Psoas muscle (tissue), 8 donors: ENCODE measurements at regions of chr12 and their contacts with region 1.

Region 1: DNA sequence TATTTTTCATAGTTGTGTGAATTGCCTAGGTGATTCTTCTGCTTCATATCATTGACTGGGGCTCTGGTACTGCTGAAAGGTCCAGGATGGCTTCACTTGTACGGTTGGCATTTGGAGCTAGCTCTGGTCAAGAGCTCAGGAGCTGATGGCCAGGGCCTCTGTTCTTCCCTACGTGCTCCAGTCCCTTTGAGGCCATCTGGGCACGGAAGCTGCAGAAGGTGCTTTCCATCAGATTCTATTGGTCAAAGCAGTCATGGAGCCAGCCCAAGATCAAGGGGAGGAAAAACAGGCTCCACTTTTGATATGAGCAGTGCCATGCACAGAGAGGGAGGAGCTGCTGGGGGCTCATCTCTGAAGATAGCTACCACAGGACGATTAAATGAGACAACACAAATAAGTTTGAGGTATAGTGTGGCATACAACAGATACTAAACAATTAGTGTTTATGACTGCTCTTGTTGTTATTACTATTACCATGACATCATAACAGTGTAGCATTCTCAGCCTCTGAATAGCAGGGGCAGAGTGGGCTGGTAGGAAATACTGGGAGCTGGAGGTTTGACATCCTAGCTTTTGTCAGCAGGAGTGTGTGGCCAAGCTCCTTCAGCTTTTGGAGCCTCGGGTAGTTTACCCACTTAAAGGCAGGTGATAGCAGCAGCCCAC is 10.4 kb downstream of the KRT83 start:
- DNase-seq: no peak
- ATAC-seq: no peak
- H3K4me3 ChIP-seq: no peak overlapping the region
- H3K27ac ChIP-seq: no peak overlapping the region
- H3K4me1 ChIP-seq: peaks cover 7% of the 10 kb centered on the region
- H3K27me3 ChIP-seq: peaks cover 0 to 4% (median 0%) of the 10 kb centered on the region in 3 donors
- CTCF ChIP-seq: no peak

Region 2: DNA sequence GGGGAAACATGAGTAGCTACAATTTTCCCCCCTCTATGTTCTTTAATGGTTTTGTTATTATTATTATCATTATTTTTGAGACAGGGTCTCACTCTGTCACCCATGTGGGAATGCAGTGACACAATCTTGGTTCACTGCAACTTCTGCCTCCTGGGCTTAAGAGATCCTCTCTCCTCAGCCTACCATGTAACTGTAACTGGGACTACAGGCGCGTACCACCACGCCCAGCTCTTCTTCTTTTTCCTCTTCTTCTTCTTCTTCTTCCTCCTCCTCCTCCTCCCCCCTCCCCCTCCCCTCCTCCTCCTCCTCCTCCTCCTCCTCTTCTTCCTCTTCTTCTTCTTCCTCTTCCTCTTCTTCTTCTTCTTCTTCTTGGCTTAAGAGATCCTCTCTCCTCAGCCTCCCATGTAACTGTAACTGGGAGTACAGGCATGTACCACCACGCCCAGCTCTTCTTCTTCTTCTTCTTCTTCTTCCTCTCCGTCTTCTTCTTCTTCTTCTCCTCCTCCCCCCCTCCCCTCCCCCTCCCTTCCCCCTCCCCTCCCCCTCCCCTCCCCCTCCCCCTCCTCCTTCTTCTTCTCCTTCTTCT is 83.1 kb before region 1 on chr12:
- intact Hi-C with region 1: loop called in 1 of 2 experiments (anchors 1 kb)
- DNase-seq: no peak
- ATAC-seq: no peak
- H3K4me3 ChIP-seq: no peak overlapping the region
- H3K27ac ChIP-seq: no peak overlapping the region
- H3K4me1 ChIP-seq: no peaks in the 10 kb centered on the region
- H3K27me3 ChIP-seq: peaks cover 0 to 34% (median 1%) of the 10 kb centered on the region in 3 donors
- CTCF ChIP-seq: no peak

Region 3: DNA sequence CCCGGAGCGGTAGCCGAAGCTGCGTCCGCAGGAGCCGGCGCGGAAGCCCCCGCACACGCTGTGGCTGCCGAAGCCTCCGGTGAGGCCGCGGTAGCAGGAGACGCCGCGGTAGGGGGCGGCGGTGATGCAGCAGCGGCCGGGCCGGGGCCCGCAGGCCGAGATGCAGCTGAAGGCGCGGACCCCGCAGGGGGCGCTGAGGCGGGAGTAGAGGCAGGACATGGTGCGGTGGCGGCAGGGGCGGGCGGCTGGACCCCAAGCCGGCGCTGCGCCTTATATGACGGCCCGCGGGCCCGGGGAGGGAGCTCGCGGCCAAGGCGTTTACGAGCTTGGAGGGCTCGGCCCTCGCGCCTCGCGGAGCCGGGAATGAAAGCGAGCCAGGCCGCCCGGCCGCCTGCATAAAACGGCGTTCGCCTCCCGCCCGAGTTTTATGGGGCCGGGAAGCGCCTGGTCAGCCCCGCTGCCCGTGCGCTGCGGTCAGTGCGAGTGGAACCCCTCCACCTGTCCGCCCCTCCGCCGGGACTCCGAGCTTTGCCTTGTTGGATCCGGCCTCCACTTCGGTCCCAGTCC is 52.3 kb before region 1 on chr12:
- intact Hi-C with region 1: no loop called
- DNase-seq: no peak
- ATAC-seq: peak in 3 of 4 donors; percentile 40 to 46 (median 46)
- H3K4me3 ChIP-seq: no peak overlapping the region
- H3K27ac ChIP-seq: no peak overlapping the region
- H3K4me1 ChIP-seq: no peaks in the 10 kb centered on the region
- H3K27me3 ChIP-seq: peaks cover 0 to 50% (median 8%) of the 10 kb centered on the region in 3 donors
- CTCF ChIP-seq: no peak